Panc1 (cell line): ENCODE measurements at regions of chr3 and their contacts with region 1.

Region 1: DNA sequence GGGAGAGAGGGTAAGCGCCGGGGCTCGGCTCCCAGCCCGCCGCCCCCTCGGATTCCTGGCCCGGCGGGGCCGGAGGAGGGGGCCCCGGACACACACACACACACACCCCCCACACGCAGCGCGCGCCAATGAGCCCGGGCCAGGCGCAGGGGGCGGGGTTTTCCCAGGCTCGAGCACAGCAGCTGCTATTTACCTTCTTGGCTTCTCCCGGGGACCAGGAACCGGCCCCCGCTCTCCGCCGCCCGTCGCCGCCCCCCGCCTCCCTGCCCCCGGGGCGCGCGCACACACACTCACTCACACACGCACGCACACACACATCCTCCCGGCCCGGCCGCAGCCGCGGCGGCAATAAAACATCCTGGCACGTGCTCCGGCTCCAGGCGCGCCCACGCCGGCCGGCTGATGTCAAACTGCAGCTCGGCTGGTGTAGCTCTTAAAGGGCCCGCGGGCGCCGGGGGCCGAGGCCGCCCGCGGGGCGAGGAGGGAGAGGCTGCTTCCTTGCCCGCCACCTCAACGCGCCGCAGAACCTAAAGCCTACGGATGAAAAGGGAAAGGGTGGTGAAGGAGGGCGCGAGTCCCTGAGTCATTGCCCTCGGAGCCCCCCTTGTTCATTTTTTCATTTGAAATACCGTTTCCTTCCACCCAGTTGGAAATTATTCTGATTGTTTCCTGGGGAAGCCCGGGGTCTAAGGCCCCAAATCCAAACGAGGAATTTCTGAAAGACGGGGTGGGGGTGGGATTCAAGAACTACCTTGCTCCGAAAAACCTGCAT is 1.0 kb upstream of the HES1 start:
- DNase-seq: no peak
- ATAC-seq: peak; percentile 74
- H3K4me3 ChIP-seq: peak overlapping the region; percentile 90 to 96
- H3K27ac ChIP-seq: peak overlapping the region; percentile 96
- H3K4me1 ChIP-seq: peaks cover 58% of the 10 kb centered on the region
- H3K27me3 ChIP-seq: no peaks in the 10 kb centered on the region
- CTCF ChIP-seq: no peak

Region 2: GRCh38 chr3:193762657-193763056 is 372.3 kb before region 1 on chr3:
- CTCF ChIA-PET with region 1: no interaction called
- POLR2A ChIA-PET with region 1: interaction called, 13 read pairs
- in situ Hi-C with region 1: no loop called
- intact Hi-C with region 1: no loop called
- DNase-seq: no peak
- ATAC-seq: no peak
- H3K4me3 ChIP-seq: no peak overlapping the region
- H3K27ac ChIP-seq: no peak overlapping the region
- H3K4me1 ChIP-seq: no peaks in the 10 kb centered on the region
- H3K27me3 ChIP-seq: no peaks in the 10 kb centered on the region
- CTCF ChIP-seq: no peak

Region 3: GRCh38 chr3:193788189-193788991 is 346.6 kb before region 1 on chr3:
- CTCF ChIA-PET with region 1: interaction called, 11 read pairs
- POLR2A ChIA-PET with region 1: interaction called, 13 read pairs
- in situ Hi-C with region 1: no loop called
- intact Hi-C with region 1: no loop called
- DNase-seq: no peak
- ATAC-seq: peak; percentile 95
- H3K4me3 ChIP-seq: no peak overlapping the region
- H3K27ac ChIP-seq: peak overlapping the region; percentile 20; the same call in 1 of the 2 replicates
- H3K4me1 ChIP-seq: peaks cover 9% of the 10 kb centered on the region; the same call in 1 of the 2 replicates
- H3K27me3 ChIP-seq: no peaks in the 10 kb centered on the region
- CTCF ChIP-seq: peak; percentile 95

Region 4: DNA sequence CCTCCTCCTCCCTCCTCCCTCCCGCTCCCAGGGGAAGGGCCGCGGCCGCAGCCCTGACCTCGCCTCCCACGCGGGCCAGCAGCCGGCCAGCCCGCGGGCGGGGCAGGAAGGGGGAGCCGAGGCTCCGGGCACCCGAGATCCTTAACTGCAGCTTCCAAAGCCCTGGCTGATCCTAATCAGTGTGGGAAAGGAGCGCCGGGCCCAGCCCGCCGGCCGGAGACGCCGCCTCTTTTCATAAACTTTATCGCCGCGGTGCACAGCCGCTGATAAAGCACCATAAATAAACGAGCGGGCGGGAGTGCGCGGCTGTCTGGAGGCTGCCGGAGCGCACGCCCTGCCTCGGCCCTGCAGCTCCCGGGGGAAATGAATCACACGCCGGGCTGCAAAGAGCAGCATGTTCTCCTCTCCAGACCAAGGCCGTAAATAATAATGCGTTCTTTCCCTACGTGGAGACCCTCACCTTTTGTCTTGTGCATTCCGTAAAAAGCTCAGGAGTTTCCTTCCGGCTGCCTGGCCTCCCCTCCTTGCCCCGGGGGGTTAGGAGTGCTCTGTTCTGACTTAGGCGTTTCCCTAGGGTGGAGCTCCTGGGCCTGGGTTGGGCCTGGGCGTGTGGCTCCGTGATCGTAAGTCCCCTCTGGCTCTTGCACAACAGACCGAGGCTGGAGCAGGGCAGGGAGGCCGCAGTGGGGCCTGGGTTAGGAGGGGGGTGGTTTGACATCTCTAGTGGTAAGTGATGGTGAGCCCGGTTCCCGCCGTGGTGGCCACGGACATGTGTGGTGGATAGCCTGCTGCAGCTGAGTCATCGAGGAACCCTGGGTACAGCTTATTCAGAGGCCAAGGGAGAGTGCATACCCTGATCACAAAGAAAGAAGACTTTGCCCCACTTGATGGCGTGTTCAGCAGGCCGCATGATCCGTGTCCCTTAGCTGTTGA is 131.6 kb before region 1 on chr3:
- CTCF ChIA-PET with region 1: no interaction called
- POLR2A ChIA-PET with region 1: interaction called, 8 read pairs
- in situ Hi-C with region 1: no loop called
- intact Hi-C with region 1: loop called (anchors 2 kb)
- DNase-seq: peak; percentile 71
- ATAC-seq: peak; percentile 92
- H3K4me3 ChIP-seq: peak overlapping the region; percentile 47 to 62
- H3K27ac ChIP-seq: peak overlapping the region; percentile 72
- H3K4me1 ChIP-seq: peaks cover 34% of the 10 kb centered on the region
- H3K27me3 ChIP-seq: no peaks in the 10 kb centered on the region
- CTCF ChIP-seq: no peak

Region 5: DNA sequence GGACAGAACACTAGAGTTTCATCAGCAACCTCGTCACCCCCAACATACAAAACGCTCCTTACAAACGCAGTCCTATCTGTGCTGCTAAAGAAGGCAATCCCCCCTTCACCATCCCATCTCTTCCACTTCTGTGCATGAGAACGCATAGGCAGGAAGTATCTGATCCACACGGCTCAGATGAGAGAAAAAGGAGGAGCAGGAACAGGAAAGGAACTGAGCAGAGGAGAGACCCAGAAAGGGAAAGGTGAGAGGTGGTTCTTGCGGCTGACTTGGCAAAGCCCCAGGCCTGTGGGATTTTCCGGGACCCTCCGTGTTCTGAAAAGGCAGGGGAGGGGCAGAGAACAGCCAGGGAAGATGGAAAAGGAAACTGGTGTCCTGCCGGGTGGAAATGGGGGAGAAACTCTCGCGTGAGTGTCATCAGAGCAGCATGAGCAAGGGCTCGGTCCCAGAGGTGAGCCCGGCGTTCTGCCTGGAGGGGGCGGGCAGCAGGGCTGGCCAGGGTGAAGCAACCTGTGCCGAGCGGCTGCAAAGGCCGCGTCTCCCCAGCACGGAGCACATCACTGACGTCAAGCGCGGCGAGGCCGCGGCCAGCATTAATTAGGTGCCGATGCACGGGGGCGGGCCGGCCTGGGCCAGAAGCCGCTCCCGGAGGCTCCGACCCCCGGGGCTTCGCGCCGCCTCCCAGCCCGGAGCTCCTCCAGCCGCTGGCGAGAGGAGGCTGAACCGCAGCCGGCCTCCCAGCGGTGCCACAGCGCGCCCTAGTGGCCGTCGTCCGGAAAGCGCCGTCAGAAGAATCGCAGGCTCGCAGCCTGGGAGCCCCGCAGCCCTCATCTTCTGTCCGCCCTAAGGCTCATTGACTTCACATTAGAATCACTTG is 180.4 kb after region 1 on chr3:
- CTCF ChIA-PET with region 1: interaction called, 17 read pairs
- POLR2A ChIA-PET with region 1: interaction called, 13 read pairs
- in situ Hi-C with region 1: no loop called
- intact Hi-C with region 1: loop called (anchors 1 kb)
- DNase-seq: no peak
- ATAC-seq: peak; percentile 92
- H3K4me3 ChIP-seq: peak overlapping the region; percentile 37 to 73
- H3K27ac ChIP-seq: peak overlapping the region; percentile 73
- H3K4me1 ChIP-seq: peaks cover 19% of the 10 kb centered on the region
- H3K27me3 ChIP-seq: no peaks in the 10 kb centered on the region
- CTCF ChIP-seq: peak; percentile 99

Region 6: DNA sequence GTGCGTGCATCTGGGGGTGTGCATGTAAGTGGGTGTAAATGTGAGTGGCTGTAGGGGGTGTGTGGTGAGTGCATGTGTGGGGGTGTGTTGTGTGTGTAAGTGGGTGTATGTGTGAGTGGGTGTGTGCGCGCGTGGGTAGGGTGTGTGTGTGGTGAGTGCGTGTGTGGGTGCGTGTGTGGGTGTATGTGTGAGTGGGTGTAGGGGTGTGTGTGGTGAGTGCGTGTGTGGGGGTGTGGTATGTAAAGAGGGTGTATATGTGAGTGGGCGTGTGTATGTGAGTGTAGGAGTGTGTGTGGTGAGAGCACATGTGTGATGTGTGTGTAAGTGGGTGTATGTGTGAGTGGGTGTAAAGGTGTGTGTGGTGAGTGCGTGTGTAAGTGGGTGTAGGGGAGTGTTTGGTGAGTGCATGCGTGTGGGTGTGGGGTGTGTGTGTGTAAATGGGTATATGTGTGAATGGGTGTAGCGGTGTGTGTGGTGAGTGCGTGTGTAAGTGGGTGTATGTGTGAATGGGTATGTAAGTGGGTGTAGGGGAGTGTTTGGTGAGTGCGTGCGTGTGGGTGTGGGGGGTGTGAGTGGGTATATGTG is 217.1 kb after region 1 on chr3:
- CTCF ChIA-PET with region 1: no interaction called
- POLR2A ChIA-PET with region 1: no interaction called
- in situ Hi-C with region 1: no loop called
- intact Hi-C with region 1: no loop called
- DNase-seq: no peak
- ATAC-seq: no peak
- H3K4me3 ChIP-seq: no peak overlapping the region
- H3K27ac ChIP-seq: no peak overlapping the region
- H3K4me1 ChIP-seq: peaks cover 11% of the 10 kb centered on the region; the same call in 1 of the 2 replicates
- H3K27me3 ChIP-seq: no peaks in the 10 kb centered on the region
- CTCF ChIP-seq: no peak

Region 7: DNA sequence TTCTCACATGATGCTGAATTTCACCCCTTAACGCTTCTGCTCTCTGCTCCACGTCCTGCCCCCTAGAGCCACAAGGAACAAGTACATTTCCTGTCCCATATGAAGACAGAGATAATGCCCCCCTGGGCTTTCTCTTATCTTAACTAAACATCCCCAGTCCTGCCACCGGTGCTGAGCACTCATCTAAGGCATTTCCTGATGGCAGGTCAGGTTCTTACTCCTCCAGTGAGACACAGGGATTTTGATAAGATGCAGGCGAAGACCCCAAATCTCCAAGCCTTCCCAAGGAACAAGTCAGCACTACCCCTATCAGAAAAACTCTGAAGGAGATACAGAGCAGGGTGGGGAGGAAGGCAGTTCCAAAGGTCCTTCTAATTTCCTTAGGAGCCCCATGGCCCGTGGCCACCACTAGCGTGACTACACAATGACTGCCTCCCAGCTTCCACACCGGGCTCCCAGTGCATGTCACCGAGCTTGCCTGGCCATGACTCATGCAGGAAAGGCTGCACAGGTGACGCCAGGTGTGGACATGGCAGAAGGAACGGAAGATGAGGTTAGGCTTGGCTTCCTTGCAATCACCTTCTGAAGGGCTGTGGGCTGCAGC is 983.1 kb after region 1 on chr3:
- CTCF ChIA-PET with region 1: no interaction called
- POLR2A ChIA-PET with region 1: no interaction called
- in situ Hi-C with region 1: no loop called
- intact Hi-C with region 1: no loop called
- DNase-seq: no peak
- ATAC-seq: peak; percentile 54
- H3K4me3 ChIP-seq: no peak overlapping the region; a peak in 1 of 4 replicates
- H3K27ac ChIP-seq: peak overlapping the region; percentile 78
- H3K4me1 ChIP-seq: peaks cover 39% of the 10 kb centered on the region
- H3K27me3 ChIP-seq: no peaks in the 10 kb centered on the region
- CTCF ChIP-seq: peak; percentile 61; the same call in 1 of the 2 replicates